B cell (primary cell): ENCODE measurements at regions of chr5 and their contacts with region 1.

Region 1: DNA sequence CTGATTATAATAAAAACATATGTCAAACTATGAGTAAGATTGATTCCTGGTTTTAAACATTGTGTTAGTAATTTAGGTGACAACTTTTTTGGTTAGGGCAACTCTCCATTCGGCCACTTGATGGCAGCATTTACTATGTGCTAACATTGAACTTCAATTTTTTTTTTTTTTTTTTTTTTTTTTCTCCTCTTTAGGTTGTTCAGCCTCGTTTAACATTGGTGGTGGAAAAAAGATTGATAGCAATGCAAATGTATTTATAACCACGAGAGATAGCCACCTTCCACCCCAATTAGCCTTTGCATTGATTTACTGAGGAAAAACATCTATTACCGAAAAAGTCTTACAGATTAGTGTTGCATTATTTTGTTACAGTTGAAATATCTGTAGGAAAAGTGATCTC is 159.1 kb downstream of the CSNK1G3 start:
- DNase-seq: peak; percentile 69
- ATAC-seq: peak; percentile 58
- H3K4me3 ChIP-seq: no peak overlapping the region
- H3K4me3 Mint-ChIP-seq: no peak overlapping the region
- H3K27ac ChIP-seq: no peak overlapping the region
- H3K27ac Mint-ChIP-seq: no peak overlapping the region
- H3K4me1 ChIP-seq: peaks cover 0 to 3% of the 10 kb centered on the region in 2 donors
- H3K4me1 Mint-ChIP-seq: peaks cover 2% of the 10 kb centered on the region
- H3K27me3 ChIP-seq: no peaks in the 10 kb centered on the region
- H3K27me3 Mint-ChIP-seq: no peaks in the 10 kb centered on the region
- CTCF ChIP-seq: peak; percentile 93

Region 2: DNA sequence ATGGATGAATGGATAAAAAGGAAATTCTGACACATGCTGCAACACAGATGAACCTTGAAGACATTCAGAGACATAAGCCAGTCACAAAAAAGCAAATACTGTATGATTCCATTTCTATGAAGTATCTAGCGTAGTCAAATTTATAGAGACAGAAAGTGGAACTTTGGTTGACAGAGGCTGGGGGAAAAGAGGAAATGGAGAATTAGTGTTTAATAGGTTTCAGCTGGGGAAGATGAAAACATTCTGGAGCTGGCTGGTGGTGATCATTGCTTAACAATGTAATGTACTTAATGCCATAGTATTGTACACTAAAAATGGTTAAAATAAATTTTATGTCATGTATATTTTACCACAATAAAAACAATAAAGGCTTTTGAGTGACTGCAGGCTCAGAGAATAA is 658.7 kb before region 1 on chr5:
- CTCF ChIA-PET with region 1: no interaction called
- POLR2A ChIA-PET with region 1: no interaction called
- intact Hi-C with region 1: no loop called
- DNase-seq: no peak
- ATAC-seq: no peak
- H3K4me3 ChIP-seq: no peak overlapping the region
- H3K4me3 Mint-ChIP-seq: no peak overlapping the region
- H3K27ac ChIP-seq: no peak overlapping the region
- H3K27ac Mint-ChIP-seq: no peak overlapping the region
- H3K4me1 ChIP-seq: no peaks in the 10 kb centered on the region
- H3K4me1 Mint-ChIP-seq: peaks cover 6% of the 10 kb centered on the region
- H3K27me3 ChIP-seq: peaks cover 0 to 4% (median 0%) of the 10 kb centered on the region in 4 experiments
- H3K27me3 Mint-ChIP-seq: no peaks in the 10 kb centered on the region
- CTCF ChIP-seq: no peak

Region 3: GRCh38 chr5:123681061-123681460 is 10.0 kb after region 1 on chr5:
- CTCF ChIA-PET with region 1: interaction called, 10 read pairs
- POLR2A ChIA-PET with region 1: no interaction called
- intact Hi-C with region 1: no loop called
- DNase-seq: no peak
- ATAC-seq: no peak
- H3K4me3 ChIP-seq: no peak overlapping the region
- H3K4me3 Mint-ChIP-seq: no peak overlapping the region
- H3K27ac ChIP-seq: no peak overlapping the region
- H3K27ac Mint-ChIP-seq: no peak overlapping the region
- H3K4me1 ChIP-seq: no peaks in the 10 kb centered on the region
- H3K4me1 Mint-ChIP-seq: no peaks in the 10 kb centered on the region
- H3K27me3 ChIP-seq: no peaks in the 10 kb centered on the region
- H3K27me3 Mint-ChIP-seq: no peaks in the 10 kb centered on the region
- CTCF ChIP-seq: no peak